ENCODE measurements at regions of chr9 and their contacts with region 1.

Region 1: DNA sequence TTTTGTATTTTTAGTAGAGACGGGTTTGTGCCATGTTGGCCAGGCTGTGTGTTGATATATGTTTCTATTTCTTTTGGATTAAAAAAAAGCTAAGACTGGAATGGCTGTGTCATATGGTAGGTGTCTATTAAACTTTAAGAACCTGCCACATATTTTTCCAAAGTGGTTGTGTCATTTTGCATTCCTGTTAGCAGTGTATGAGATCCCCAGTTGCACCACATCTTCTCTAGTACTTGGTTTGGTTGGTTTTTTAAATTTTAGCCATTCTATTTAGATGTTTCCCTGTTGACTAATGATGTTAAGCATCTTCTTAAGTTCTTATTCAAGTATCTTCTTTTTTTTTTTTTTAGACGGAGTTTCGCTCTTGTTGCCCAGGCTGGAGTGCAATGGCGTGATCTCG is 36.2 kb upstream of the MEGF9 start:
- DNase-seq: no peak
- H3K4me3 ChIP-seq: no peak overlapping the region
- H3K4me3 Mint-ChIP-seq: no peak overlapping the region
- H3K27ac ChIP-seq: no peak overlapping the region
- H3K27ac Mint-ChIP-seq: peak overlapping the region in 1 of 7 donors; percentile 45
- H3K4me1 ChIP-seq: peaks cover 10 to 13% of the 10 kb centered on the region in 2 donors
- H3K4me1 Mint-ChIP-seq: peaks cover 17% of the 10 kb centered on the region
- H3K27me3 ChIP-seq: no peaks in the 10 kb centered on the region
- H3K27me3 Mint-ChIP-seq: no peaks in the 10 kb centered on the region
- CTCF ChIP-seq: no peak

Region 2: GRCh38 chr9:121074635-121075385 is 324.4 kb after region 1 on chr9 and contains the start of gene CNTRL:
- intact Hi-C with region 1: loop called in 1 of 2 experiments (anchors 5 kb)
- DNase-seq: peak; percentile 65 to 71 (median 66)
- H3K4me3 ChIP-seq: peak within 1 kb of the TSS; percentile 71 to 90 (median 85)
- H3K4me3 Mint-ChIP-seq: peak within 1 kb of the TSS; percentile 97 to 99
- H3K27ac ChIP-seq: peak within 1 kb of the TSS; percentile 83 to 97
- H3K27ac Mint-ChIP-seq: peak within 1 kb of the TSS; percentile 88 to 99 (median 97)
- H3K4me1 ChIP-seq: peaks cover 47 to 53% of the 10 kb centered on the region in 2 donors
- H3K4me1 Mint-ChIP-seq: peaks cover 53% of the 10 kb centered on the region
- H3K27me3 ChIP-seq: no peaks in the 10 kb centered on the region
- H3K27me3 Mint-ChIP-seq: no peaks in the 10 kb centered on the region
- CTCF ChIP-seq: no peak
- polyA plus RNA-seq, gene CNTRL: 3.9 to 26.8 (median 4.8) TPM